T-cell (primary cell): ENCODE measurements at regions of chr4 and their contacts with region 1.

Region 1: GRCh38 chr4:61520681-61521160 is 320.6 kb downstream of the ADGRL3 start:
- DNase-seq: no peak
- ATAC-seq: no peak
- H3K4me3 ChIP-seq: no peak overlapping the region
- H3K4me3 Mint-ChIP-seq: no peak overlapping the region
- H3K27ac ChIP-seq: no peak overlapping the region
- H3K27ac Mint-ChIP-seq: no peak overlapping the region
- H3K4me1 ChIP-seq: no peaks in the 10 kb centered on the region
- H3K4me1 Mint-ChIP-seq: no peaks in the 10 kb centered on the region
- H3K27me3 ChIP-seq: no peaks in the 10 kb centered on the region
- H3K27me3 Mint-ChIP-seq: no peaks in the 10 kb centered on the region

Region 2: GRCh38 chr4:61532336-61533000 is 11.7 kb after region 1 on chr4:
- CTCF ChIA-PET with region 1: no interaction called
- POLR2A ChIA-PET with region 1: no interaction called
- DNase-seq: no peak
- ATAC-seq: no peak
- H3K4me3 ChIP-seq: no peak overlapping the region
- H3K4me3 Mint-ChIP-seq: no peak overlapping the region
- H3K27ac ChIP-seq: no peak overlapping the region
- H3K27ac Mint-ChIP-seq: no peak overlapping the region
- H3K4me1 ChIP-seq: no peaks in the 10 kb centered on the region
- H3K4me1 Mint-ChIP-seq: no peaks in the 10 kb centered on the region
- H3K27me3 ChIP-seq: no peaks in the 10 kb centered on the region
- H3K27me3 Mint-ChIP-seq: no peaks in the 10 kb centered on the region

Region 3: DNA sequence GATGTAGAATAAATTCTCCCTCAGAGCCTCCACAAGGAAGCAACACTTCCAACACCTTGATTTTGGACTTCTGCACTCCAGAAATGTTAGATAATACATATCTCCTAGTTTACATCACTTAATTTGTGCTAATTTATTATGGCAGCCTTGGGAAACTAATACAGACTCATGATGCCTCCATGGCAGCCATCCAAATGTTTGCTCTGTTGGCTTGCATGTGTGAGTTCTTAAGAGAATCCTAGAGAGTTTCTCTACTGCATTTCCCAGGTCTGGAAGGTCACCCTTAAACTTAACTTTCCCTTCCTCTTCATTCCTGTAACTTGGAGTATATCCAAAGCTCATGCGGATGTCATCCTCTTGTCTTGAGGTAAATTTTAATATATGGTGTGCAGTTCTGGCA is 635.5 kb after region 1 on chr4:
- CTCF ChIA-PET with region 1: no interaction called
- POLR2A ChIA-PET with region 1: interaction called in 1 of 2 experiments, 10 read pairs
- DNase-seq: no peak
- ATAC-seq: no peak
- H3K4me3 ChIP-seq: no peak overlapping the region
- H3K4me3 Mint-ChIP-seq: no peak overlapping the region
- H3K27ac ChIP-seq: no peak overlapping the region
- H3K27ac Mint-ChIP-seq: no peak overlapping the region
- H3K4me1 ChIP-seq: no peaks in the 10 kb centered on the region
- H3K4me1 Mint-ChIP-seq: no peaks in the 10 kb centered on the region
- H3K27me3 ChIP-seq: no peaks in the 10 kb centered on the region
- H3K27me3 Mint-ChIP-seq: no peaks in the 10 kb centered on the region